A549 (cell line): ENCODE measurements at regions of chr9 and their contacts with region 1.

Region 1: DNA sequence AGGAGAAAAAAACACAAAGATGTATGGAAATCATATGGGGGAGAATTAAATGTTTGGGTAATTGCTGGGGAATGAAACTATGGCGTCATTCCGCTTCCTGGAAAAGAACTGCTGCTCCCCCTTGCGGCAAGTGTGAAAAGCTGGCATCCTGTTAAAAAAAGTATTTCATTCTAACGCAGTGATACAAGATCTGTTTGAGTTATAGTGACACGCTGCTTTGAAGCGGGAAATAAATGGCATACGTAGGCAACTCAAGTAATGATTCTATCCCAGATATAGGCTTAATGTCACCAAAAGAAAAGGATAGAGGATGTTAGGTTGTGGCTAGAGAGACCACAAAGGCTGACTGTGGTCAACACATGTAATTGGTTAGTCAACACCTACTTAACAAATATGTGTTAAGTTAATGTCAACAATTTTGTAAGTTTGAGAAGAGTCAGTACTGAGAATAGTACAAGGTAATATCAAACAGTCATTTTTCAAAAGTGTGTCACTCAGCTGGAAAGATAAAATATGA is 70.2 kb upstream of the ALDH1A1 start:
- DNase-seq: peak; percentile 42 to 96
- ATAC-seq: peak; percentile 77 to 89
- H3K4me3 ChIP-seq: no peak overlapping the region; the same call in 2 of the 3 replicates
- H3K27ac ChIP-seq: peak overlapping the region; percentile 87 to 89
- H3K4me1 ChIP-seq: peaks cover 27% of the 10 kb centered on the region
- CTCF ChIP-seq: peak; percentile 92
- EP300 ChIP-seq: peak in 1 of 2 experiments; percentile 41; a peak in 1 of 5 replicates
- POLR2A ChIP-seq: no peak
- RAD21 ChIP-seq: peak; percentile 96 to 97

Region 2: GRCh38 chr9:72871685-72872084 is 151.4 kb before region 1 on chr9:
- CTCF ChIA-PET with region 1: interaction called, 28 read pairs
- POLR2A ChIA-PET with region 1: no interaction called
- DNase-seq: peak in 1 of 2 experiments; percentile 48
- ATAC-seq: peak in 1 of 2 experiments; percentile 43; a peak in 4 of 6 replicates
- H3K4me3 ChIP-seq: no peak overlapping the region
- H3K27ac ChIP-seq: peak overlapping the region; percentile 61 to 81
- H3K4me1 ChIP-seq: peaks cover 47% of the 10 kb centered on the region
- CTCF ChIP-seq: peak; percentile 88
- EP300 ChIP-seq: no peak
- POLR2A ChIP-seq: no peak
- RAD21 ChIP-seq: peak; percentile 77 to 91

Region 3: DNA sequence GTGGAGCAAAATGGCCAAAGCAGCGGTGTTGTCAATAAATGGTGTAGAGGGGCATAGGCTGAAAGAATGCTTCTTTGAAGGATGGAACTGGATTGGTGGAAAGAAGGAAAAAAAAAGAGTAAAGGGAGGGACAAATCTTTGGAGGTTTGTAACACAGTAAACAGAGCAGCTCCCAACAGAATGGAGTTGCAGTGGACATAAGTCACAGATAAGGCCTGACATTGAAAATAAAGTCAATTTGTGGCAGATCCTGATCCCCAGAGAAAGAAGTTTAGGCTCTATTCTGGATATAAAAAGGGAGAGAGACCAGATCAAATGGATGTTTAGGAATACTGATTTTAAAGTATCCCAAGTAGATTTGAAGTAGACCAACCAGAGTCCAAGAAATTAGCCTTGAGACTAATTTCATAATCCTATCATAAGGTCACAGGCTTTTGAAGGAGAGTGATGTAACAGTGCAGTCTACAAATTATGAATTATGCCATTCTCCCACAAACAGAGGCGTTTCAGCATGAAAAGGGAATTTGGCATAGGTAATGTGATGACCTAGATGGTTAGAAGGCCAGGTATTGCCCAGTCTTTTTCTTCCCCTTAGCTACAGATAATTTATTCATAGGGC is 79.1 kb before region 1 on chr9:
- CTCF ChIA-PET with region 1: interaction called, 35 read pairs
- POLR2A ChIA-PET with region 1: interaction called, 3 read pairs
- DNase-seq: peak in 1 of 2 experiments; percentile 70
- ATAC-seq: peak in 1 of 2 experiments; percentile 36; a peak in 3 of 6 replicates
- H3K4me3 ChIP-seq: peak overlapping the region; percentile 67
- H3K27ac ChIP-seq: peak overlapping the region; percentile 88 to 90
- H3K4me1 ChIP-seq: peaks cover 39% of the 10 kb centered on the region; the same call in 2 of the 3 replicates
- CTCF ChIP-seq: no peak
- EP300 ChIP-seq: no peak
- POLR2A ChIP-seq: no peak
- RAD21 ChIP-seq: no peak

Region 4: GRCh38 chr9:72986522-72987116 is 36.5 kb before region 1 on chr9:
- CTCF ChIA-PET with region 1: interaction called, 21 read pairs
- POLR2A ChIA-PET with region 1: no interaction called
- DNase-seq: peak in 1 of 2 experiments; percentile 69
- ATAC-seq: no peak
- H3K4me3 ChIP-seq: no peak overlapping the region
- H3K27ac ChIP-seq: peak overlapping the region; percentile 91 to 98
- H3K4me1 ChIP-seq: peaks cover 94% of the 10 kb centered on the region
- CTCF ChIP-seq: no peak
- EP300 ChIP-seq: peak; percentile 65 to 83; a peak in 3 of 5 replicates
- POLR2A ChIP-seq: no peak
- RAD21 ChIP-seq: no peak

Region 5: DNA sequence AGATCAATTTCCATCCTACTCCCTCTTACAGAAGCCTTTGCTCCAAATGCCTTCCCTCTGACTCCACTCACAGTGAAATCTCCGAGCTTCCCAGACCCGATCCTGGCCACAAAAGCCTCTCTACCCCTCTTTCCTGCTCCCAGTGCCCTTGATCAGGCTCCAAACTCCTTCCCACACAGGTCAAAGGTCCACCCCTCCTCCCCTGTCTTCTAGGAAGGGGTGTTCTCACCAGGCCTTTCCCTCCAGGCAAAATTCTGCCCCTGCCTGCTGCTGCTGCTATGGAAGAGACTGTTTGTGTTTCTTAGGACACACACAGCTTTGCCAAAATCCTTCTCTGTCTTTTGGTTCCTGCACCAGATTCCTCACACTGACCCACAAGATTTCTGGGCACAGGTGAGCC is 15.5 kb after region 1 on chr9:
- CTCF ChIA-PET with region 1: interaction called, 20 read pairs
- POLR2A ChIA-PET with region 1: interaction called, 4 read pairs
- DNase-seq: peak in 1 of 2 experiments; percentile 77
- ATAC-seq: peak; percentile 77 to 80
- H3K4me3 ChIP-seq: peak overlapping the region; percentile 34
- H3K27ac ChIP-seq: peak overlapping the region; percentile 92 to 96
- H3K4me1 ChIP-seq: peaks cover 71% of the 10 kb centered on the region
- CTCF ChIP-seq: no peak
- EP300 ChIP-seq: 0 out of 5 replicates have a peak, but pooled peaks of 1 of the 2 experiments have one; percentile 23
- POLR2A ChIP-seq: peak; percentile 10; the same call in 1 of the 2 replicates
- RAD21 ChIP-seq: no peak

Region 6: DNA sequence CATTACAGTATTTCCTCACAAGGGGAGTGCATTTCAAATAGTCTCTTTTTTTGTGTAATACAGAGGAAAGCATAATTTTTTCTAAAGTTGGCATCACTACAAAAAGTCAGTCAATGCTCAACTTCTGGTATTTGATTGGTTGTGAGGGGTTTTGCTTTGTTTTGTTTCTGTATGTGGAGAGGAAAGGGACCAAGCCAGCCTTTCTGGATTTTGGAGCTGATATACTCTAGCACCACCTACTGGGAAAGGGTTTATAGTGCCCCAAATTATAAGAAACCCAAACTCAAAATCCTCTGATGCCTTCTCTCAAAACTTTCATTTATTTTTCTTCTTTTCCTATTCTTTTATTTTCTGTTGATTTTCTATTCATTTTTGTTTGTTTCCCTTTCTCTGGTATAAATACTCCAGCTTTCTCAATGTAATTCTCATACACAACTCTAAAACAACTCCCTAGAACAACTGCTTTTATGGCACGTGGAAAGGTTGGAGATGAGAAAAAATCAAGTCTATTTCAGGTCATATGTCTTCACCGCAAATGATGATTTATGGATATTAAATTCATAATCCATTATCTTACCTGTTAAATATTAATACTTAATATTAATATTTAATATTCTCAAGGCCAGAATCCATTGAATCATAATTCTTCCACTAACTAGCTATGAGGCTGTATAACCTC is 59.0 kb after region 1 on chr9:
- CTCF ChIA-PET with region 1: interaction called, 14 read pairs
- POLR2A ChIA-PET with region 1: no interaction called
- DNase-seq: peak; percentile 49 to 92
- ATAC-seq: peak; percentile 58 to 61; a peak in 5 of 6 replicates
- H3K4me3 ChIP-seq: no peak overlapping the region
- H3K27ac ChIP-seq: peak overlapping the region; percentile 82 to 94
- H3K4me1 ChIP-seq: peaks cover 80% of the 10 kb centered on the region
- CTCF ChIP-seq: peak; percentile 94
- EP300 ChIP-seq: no peak
- POLR2A ChIP-seq: no peak
- RAD21 ChIP-seq: peak; percentile 94 to 95